ENCODE measurements at regions of chr20 and their contacts with region 1.

Region 1: GRCh38 chr20:38057351-38057972 is 23.9 kb downstream of the RPRD1B start:
- DNase-seq: no peak
- H3K4me3 ChIP-seq: no peak overlapping the region
- H3K27me3 ChIP-seq: no peaks in the 10 kb centered on the region
- CTCF ChIP-seq: peak; percentile 79

Region 2: GRCh38 chr20:37968841-37969401 is 88.5 kb before region 1 on chr20:
- CTCF ChIA-PET with region 1: no interaction called
- POLR2A ChIA-PET with region 1: no interaction called
- DNase-seq: no peak
- H3K4me3 ChIP-seq: no peak overlapping the region
- H3K27me3 ChIP-seq: no peaks in the 10 kb centered on the region
- CTCF ChIP-seq: no peak

Region 3: GRCh38 chr20:38043512-38044300 is 13.8 kb before region 1 on chr20:
- CTCF ChIA-PET with region 1: interaction called, 14 read pairs
- POLR2A ChIA-PET with region 1: interaction called, 8 read pairs
- DNase-seq: no peak
- H3K4me3 ChIP-seq: no peak overlapping the region
- H3K27me3 ChIP-seq: no peaks in the 10 kb centered on the region
- CTCF ChIP-seq: no peak

Region 4: DNA sequence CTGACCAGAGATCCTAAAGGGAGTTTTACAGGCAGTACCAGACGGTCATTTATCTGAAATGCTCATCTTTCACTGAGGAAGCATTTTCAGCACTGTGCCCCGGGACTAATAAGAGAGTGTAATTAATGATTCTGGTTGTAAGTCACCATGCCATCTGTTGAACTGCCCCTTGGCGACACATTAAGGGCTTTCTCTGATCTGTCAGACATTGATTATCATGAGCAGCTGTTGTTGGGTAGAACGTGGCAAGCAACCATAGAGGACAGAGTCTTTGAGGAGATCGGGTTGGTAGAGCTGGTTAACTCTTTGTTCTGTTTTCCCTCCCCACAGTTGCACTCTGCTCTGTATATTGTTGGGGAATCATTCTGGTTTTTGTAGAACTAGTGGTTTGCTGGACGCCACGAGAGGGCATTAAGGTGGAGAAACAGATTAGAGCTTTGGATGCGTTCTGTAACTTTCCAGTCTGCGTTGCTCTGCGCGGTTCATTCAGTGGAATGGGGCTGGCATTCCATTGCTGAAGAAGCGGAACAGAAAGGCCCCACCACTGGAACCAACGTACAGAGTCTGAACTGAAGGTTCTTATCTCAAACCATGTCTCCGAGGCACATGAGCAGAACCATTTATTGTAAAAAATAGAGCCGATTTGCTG is 10.4 kb after region 1 on chr20:
- CTCF ChIA-PET with region 1: interaction called, 22 read pairs
- POLR2A ChIA-PET with region 1: no interaction called
- DNase-seq: no peak
- H3K4me3 ChIP-seq: no peak overlapping the region
- H3K27me3 ChIP-seq: no peaks in the 10 kb centered on the region
- CTCF ChIP-seq: no peak

Region 5: DNA sequence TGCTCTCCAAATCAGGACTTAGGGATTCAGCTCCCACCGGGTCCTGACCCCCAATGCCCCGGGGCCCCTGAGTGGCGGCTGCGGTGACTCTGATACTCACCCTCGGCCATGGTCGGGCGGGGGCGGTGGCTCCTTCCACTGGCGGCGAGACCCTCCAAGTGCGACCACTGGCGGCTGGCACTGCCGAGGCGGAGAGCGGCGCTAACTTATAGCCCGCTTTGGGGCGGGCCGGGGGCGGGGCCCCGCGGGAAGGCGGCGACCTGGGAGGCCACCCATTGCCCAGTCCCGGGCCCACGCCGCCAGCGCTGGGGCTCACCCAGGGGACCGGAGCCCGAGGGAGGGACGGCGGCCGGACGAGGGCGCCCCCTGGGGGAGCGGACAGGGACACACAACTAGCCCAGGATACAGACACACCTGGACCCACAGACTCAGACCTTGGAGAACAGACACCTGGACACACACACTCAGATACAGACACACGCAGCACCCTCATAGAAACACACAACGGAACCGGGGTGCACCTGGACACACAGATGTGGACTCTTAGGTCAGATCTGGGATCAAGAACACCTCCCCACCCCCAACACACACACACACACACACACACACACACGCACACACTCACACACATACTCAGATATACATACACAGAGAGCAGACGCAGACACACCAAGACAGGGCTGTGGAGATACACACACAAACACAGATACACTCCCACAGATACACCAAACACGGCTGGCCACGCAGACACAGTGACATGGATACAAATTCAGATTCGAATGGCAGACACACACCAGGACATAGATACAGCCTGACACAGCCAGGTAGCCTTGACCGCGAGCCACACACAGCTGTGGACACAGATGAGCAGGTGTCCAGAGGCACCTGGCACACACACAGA is 107.9 kb after region 1 on chr20 and contains the start of gene TGM2:
- CTCF ChIA-PET with region 1: interaction called, 10 read pairs
- POLR2A ChIA-PET with region 1: no interaction called
- DNase-seq: no peak
- H3K4me3 ChIP-seq: peak within 1 kb of the TSS; percentile 50
- H3K27me3 ChIP-seq: no peaks in the 10 kb centered on the region
- CTCF ChIP-seq: peak; percentile 77
- polyA plus RNA-seq, gene TGM2: 313 and 397 TPM in 2 replicates

Measured in BJ (cell line).